ENCODE measurements at regions of chr17 and their contacts with region 1.

Region 1: GRCh38 chr17:48215583-48216139 is 108.1 kb downstream of the SNX11 start:
- DNase-seq: peak; percentile 46
- H3K4me3 Mint-ChIP-seq: no peak overlapping the region
- H3K27ac Mint-ChIP-seq: no peak overlapping the region
- H3K4me1 Mint-ChIP-seq: no peaks in the 10 kb centered on the region
- H3K27me3 Mint-ChIP-seq: peaks cover 71% of the 10 kb centered on the region
- CTCF ChIP-seq: peak; percentile 80

Region 2: DNA sequence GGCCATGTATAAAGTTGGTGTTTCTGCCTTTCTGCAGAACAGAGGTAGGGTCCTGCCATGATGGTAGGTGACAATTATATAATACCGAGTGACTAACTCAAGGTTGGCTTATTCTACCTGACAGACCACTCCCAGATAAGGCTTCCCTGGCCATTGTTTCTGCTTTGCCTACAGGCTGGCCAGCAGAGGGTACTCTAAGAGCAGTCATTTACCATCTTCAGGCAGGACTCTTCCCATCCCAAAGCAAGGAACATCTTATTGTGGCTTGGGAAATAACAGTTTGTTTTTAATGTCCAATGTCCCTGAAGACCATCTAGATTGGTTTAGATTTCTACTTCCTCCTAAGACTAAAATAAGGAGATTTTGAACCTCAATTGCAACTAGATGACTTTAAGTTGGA is 34.0 kb before region 1 on chr17:
- CTCF ChIA-PET with region 1: no interaction called
- POLR2A ChIA-PET with region 1: no interaction called
- intact Hi-C with region 1: no loop called
- DNase-seq: peak; percentile 35
- H3K4me3 Mint-ChIP-seq: no peak overlapping the region
- H3K27ac Mint-ChIP-seq: no peak overlapping the region
- H3K4me1 Mint-ChIP-seq: no peaks in the 10 kb centered on the region
- H3K27me3 Mint-ChIP-seq: peaks cover 79% of the 10 kb centered on the region
- CTCF ChIP-seq: peak; percentile 27

Region 3: GRCh38 chr17:48259694-48260291 is 44.1 kb after region 1 on chr17:
- CTCF ChIA-PET with region 1: interaction called, 7 read pairs
- POLR2A ChIA-PET with region 1: interaction called, 3 read pairs
- intact Hi-C with region 1: loop called (anchors 2 kb)
- DNase-seq: peak; percentile 52
- H3K4me3 Mint-ChIP-seq: no peak overlapping the region
- H3K27ac Mint-ChIP-seq: no peak overlapping the region
- H3K4me1 Mint-ChIP-seq: no peaks in the 10 kb centered on the region
- H3K27me3 Mint-ChIP-seq: peaks cover 53% of the 10 kb centered on the region
- CTCF ChIP-seq: peak; percentile 39

Region 4: GRCh38 chr17:48307814-48308411 is 92.3 kb after region 1 on chr17:
- CTCF ChIA-PET with region 1: interaction called, 5 read pairs
- POLR2A ChIA-PET with region 1: no interaction called
- intact Hi-C with region 1: loop called (anchors 5 kb)
- DNase-seq: peak; percentile 58
- H3K4me3 Mint-ChIP-seq: no peak overlapping the region
- H3K27ac Mint-ChIP-seq: no peak overlapping the region
- H3K4me1 Mint-ChIP-seq: no peaks in the 10 kb centered on the region
- H3K27me3 Mint-ChIP-seq: peaks cover 94% of the 10 kb centered on the region
- CTCF ChIP-seq: peak; percentile 74

Region 5: DNA sequence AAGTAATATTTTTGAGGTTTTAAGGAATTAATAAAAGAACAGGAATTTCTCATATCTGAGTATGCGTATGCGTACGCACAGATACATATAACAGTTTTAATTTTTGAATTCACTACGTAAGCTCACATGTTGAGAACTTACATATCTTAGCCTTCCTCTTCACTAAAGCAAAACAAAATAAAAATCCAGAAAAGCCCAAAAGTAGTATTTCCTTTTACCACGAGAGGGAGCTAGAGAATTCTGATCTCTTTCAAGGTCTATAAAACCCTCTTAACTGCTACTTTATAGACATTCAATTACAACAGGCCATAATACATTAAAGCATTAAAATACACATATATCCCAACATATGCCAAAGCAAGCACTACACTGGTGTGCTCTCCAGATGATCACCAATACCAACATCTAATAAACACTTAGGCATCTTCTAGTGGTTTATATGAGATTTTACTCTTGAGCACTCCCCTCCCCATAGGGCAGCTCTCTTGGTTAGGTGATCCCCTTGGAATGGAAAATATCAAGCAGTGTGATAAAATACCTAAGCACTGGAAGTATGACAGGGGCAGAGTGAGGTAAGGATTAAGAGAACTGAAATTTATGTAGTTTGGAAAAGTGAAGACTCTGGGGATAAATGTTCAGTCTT is 120.3 kb after region 1 on chr17:
- CTCF ChIA-PET with region 1: no interaction called
- POLR2A ChIA-PET with region 1: no interaction called
- intact Hi-C with region 1: loop called (anchors 5 kb)
- DNase-seq: peak; percentile 59
- H3K4me3 Mint-ChIP-seq: no peak overlapping the region
- H3K27ac Mint-ChIP-seq: no peak overlapping the region
- H3K4me1 Mint-ChIP-seq: no peaks in the 10 kb centered on the region
- H3K27me3 Mint-ChIP-seq: peaks cover 67% of the 10 kb centered on the region
- CTCF ChIP-seq: peak; percentile 48

Measured in MCF 10A (cell line).